ENCODE measurements at regions of chr16 and their contacts with region 1.

Region 1: GRCh38 chr16:67806428-67807147 is at the starts of genes RANBP10 and TSNAXIP1:
- DNase-seq: peak; percentile 93
- ATAC-seq: peak; percentile 89
- H3K4me3 Mint-ChIP-seq: peak within 1 kb of the TSS; percentile 96
- H3K27ac Mint-ChIP-seq: peak within 1 kb of the TSS; percentile 96
- H3K4me1 Mint-ChIP-seq: peaks cover 49% of the 10 kb centered on the region
- H3K27me3 Mint-ChIP-seq: no peaks in the 10 kb centered on the region
- CTCF ChIP-seq: no peak
- total RNA-seq, gene RANBP10: 25.2 and 30.6 TPM in 2 replicates
- total RNA-seq, gene TSNAXIP1: 1.2 and 1.9 TPM in 2 replicates

Region 2: DNA sequence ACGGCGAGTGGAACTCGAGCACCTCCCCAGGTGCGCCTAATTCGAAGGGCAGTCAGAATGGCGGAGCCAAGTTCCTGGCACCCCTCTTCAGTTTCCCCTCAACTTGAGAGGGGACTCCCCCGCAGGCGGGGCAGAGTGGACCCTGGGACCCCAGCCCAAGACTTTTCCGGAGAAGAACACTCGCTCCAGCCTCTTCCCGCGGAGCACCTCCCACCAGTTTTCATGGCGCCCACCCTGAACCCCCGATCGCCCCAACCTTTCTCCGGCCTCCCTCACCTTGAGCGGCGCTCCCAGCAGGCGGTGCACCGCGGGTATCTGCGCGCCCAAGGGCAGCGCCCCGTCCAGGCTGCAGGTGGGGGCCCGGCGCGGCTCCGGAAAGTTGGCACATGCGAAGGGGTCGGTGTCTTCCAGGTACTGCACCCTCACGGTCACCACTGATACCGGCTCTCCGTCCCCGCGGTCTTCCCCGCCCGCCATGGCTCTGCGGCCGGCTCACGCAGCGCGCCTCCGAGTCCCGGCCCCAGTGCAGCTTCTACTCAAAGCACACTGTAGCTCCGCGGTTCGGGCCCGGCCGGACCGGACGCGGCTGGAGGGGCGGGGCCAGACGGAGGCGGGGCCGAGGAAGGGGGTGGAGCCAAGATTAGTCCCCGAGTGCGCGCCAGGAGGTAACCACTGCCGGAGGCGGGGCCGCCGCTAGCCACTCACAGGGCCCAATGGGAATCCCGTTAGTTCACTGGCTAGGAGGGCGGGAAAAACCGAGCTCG is 559.5 kb before region 1 on chr16 and contains the start of gene FHOD1:
- CTCF ChIA-PET with region 1: no interaction called
- POLR2A ChIA-PET with region 1: no interaction called
- intact Hi-C with region 1: loop called (anchors 10 kb)
- DNase-seq: peak; percentile 100
- ATAC-seq: peak; percentile 70
- H3K4me3 Mint-ChIP-seq: peak within 1 kb of the TSS; percentile 85
- H3K27ac Mint-ChIP-seq: peak within 1 kb of the TSS; percentile 80
- H3K4me1 Mint-ChIP-seq: peaks cover 50% of the 10 kb centered on the region
- H3K27me3 Mint-ChIP-seq: peaks cover 2% of the 10 kb centered on the region
- CTCF ChIP-seq: no peak
- total RNA-seq, gene FHOD1: 45.5 and 50.4 TPM in 2 replicates

Region 3: DNA sequence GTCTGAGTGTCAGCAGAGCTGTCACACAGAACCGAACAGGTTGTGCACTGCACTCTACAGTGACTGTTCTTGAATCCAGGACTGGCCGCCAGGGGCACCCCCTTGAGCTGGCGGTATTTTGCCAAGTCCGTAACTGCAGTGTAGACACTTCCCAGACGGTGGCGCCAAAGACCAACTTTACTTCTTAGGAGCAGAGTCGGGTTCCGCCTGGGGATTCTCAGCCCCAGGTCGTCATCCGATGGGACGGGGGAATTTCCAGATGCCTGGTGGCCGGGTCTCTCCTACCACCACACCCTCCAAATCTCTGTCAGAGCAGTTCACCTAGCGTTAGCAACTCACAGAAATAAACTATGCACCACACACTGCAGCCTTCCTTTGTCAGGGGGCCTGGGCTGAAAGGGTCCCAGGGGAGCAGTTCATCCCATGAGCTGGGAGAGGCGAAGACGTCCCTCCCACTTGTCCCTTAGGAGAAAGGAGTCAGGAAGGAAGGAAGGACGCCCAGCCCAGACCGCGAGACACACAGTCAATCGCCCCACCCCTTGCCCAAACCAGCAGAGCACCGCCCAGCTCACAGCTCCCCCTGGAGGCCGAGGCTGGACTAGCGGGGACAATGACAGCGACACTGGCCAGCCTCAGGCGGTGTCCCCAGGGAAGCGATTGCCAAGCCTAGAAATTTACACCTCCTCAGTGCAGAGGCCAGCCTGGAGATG is 285.3 kb before region 1 on chr16:
- CTCF ChIA-PET with region 1: interaction called, 3 read pairs
- POLR2A ChIA-PET with region 1: interaction called, 4 read pairs
- intact Hi-C with region 1: loop called (anchors 5 kb)
- DNase-seq: peak; percentile 95
- ATAC-seq: peak; percentile 70
- H3K4me3 Mint-ChIP-seq: peak overlapping the region; percentile 89
- H3K27ac Mint-ChIP-seq: peak overlapping the region; percentile 98
- H3K4me1 Mint-ChIP-seq: peaks cover 75% of the 10 kb centered on the region
- H3K27me3 Mint-ChIP-seq: no peaks in the 10 kb centered on the region
- CTCF ChIP-seq: peak; percentile 85

Region 4: GRCh38 chr16:67685388-67686112 is 121.0 kb before region 1 on chr16:
- CTCF ChIA-PET with region 1: no interaction called
- POLR2A ChIA-PET with region 1: interaction called, 3 read pairs
- intact Hi-C with region 1: loop called (anchors 5 kb)
- DNase-seq: no peak
- ATAC-seq: peak; percentile 92
- H3K4me3 Mint-ChIP-seq: peak overlapping the region; percentile 53
- H3K27ac Mint-ChIP-seq: peak overlapping the region; percentile 77
- H3K4me1 Mint-ChIP-seq: peaks cover 27% of the 10 kb centered on the region
- H3K27me3 Mint-ChIP-seq: no peaks in the 10 kb centered on the region
- CTCF ChIP-seq: no peak

Region 5: DNA sequence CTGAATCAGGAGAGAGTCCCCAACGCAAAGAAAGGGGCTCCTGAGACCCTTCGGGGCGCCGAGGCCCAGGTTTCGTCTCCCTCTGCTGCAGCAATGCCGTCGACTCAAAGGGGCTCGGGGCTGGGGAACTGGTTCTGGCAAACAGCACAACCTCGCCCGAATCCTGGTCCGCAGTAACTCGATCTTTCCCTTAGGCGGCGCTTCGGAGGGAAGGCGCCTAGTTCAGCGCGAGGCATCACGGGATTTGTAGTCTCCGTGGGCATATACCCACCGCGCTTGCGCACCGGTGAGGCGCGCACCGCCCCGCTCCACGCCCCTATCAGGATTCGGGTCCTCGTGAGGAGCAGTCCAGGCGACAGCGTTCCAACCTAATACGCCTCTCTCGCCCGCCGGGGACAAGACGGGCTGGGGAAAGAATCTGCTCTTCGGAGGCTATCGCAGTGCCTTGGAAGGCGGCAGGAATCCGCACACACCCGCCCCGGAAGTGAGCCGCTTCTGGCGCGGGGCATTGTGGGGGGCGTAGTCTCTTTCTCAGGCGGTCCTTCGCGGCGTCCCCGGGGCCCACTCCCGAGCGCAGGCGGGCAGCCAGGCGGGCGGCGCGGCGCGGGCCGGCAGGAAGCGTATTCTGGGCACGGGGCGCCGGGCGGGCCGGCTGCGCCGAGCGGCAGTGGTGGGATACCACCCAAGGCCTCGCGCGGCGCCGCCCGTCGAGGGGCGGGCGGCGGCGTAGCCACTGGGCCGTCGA is 35.3 kb after region 1 on chr16 and contains the start of gene THAP11:
- CTCF ChIA-PET with region 1: no interaction called
- POLR2A ChIA-PET with region 1: interaction called, 11 read pairs
- intact Hi-C with region 1: loop called (anchors 1 kb)
- DNase-seq: peak; percentile 95
- ATAC-seq: peak; percentile 54
- H3K4me3 Mint-ChIP-seq: peak within 1 kb of the TSS; percentile 95
- H3K27ac Mint-ChIP-seq: peak within 1 kb of the TSS; percentile 95
- H3K4me1 Mint-ChIP-seq: peaks cover 43% of the 10 kb centered on the region
- H3K27me3 Mint-ChIP-seq: no peaks in the 10 kb centered on the region
- CTCF ChIP-seq: peak; percentile 38
- total RNA-seq, gene THAP11: 24.2 and 24.9 TPM in 2 replicates

Region 6: DNA sequence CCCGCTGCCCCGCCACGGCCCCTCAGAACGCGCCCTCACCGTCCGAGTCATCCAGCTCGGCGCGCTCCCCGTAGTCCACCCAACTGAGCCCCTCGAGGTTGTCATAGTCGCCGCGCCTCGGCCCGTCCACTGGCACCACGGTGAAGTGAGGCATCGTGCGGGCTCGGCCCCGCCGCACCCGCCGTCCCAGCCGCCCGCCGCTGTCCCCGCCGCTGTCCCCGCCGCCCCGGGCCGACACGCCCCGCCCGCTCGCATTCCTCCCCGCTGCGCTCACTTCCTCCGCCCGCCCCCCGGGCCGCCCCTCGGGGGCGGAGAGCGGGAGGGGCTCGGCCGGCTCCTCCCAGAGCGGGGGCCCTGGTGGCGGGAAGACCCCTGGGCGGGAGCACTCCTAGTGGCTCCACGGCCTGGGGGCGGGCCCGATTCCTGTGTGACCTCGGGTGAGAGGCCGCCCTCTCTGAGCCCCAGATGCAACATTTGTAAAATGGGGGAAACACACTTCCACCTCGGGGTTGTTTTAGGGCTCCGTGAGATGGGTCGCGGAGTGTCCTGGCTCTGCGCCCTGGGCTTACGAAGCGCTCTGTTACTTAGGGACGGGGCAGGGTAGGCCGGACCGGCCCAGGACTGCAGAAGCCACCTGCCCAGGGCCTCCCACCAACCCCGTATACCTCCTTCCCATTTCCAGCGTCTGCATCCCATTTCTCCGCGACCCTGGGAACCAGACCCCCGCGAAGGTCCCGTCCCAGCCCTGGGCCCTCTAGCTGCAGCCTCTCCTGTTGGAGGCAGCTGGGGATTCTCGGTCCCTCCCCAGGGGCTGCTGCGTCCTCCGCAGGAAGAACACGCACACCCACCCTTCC is 162.0 kb after region 1 on chr16 and contains the start of gene SLC12A4:
- CTCF ChIA-PET with region 1: interaction called, 3 read pairs
- POLR2A ChIA-PET with region 1: interaction called, 4 read pairs
- intact Hi-C with region 1: loop called (anchors 1 kb)
- DNase-seq: peak; percentile 87
- ATAC-seq: peak; percentile 93
- H3K4me3 Mint-ChIP-seq: peak within 1 kb of the TSS; percentile 96
- H3K27ac Mint-ChIP-seq: peak within 1 kb of the TSS; percentile 80
- H3K4me1 Mint-ChIP-seq: peaks cover 28% of the 10 kb centered on the region
- H3K27me3 Mint-ChIP-seq: no peaks in the 10 kb centered on the region
- CTCF ChIP-seq: no peak
- total RNA-seq, gene SLC12A4: 24.6 and 37.9 TPM in 2 replicates